ENCODE measurements at regions of chr4 and their contacts with region 1.

Region 1: DNA sequence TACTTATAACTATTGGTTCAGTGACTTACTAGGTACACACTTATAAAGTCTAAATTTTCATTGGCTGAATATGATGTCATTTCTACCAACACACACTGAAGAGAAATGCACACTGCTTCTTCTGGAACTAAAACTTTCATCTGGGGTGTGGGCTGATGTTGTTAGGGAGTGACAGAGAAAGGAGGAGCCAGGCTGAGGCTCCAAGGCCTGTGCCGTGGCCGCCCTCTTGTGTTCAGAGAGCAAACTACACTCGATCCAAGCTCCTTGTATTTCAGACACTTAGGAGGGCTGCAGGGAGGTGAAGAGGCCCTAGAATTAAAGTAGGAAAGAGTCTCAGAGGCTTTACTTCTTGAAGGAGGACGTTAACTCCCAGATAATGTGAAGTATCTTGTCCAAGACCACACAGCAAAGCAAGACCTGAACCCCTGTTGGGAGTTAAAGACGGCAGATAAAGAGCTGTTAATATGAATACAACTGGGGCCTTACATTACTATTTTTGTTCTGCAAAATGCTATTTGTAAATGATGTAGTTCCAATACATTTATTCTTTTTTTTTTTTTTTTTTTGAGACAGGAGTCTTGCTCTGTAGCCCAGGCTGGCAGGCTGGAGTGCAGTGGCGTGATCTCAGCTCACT is 137.5 kb downstream of the AFAP1 start:
- DNase-seq: peak; percentile 87
- ATAC-seq: peak; percentile 88
- H3K4me3 Mint-ChIP-seq: no peak overlapping the region
- H3K27ac Mint-ChIP-seq: no peak overlapping the region
- H3K4me1 Mint-ChIP-seq: peaks cover 8% of the 10 kb centered on the region
- H3K27me3 Mint-ChIP-seq: no peaks in the 10 kb centered on the region

Region 2: DNA sequence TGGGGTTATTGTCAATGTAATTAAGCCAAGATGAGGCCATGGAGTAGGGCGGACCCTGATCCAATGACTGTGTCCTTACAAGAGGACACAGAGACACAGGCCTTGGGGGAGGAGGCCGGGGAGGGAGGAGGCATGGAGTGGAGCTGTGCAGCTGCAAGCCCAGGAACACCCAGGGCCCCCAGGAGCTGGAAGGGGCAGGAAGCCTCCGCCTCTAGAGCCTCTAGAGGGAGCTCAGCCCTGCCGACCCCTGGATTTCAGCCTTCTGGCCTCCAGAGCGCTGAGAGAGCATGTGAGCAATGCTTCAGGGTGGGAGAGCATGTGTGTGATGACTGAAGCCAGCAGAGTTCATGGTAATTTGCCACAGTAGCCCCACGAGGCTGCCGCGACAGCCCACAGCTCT is 97.1 kb before region 1 on chr4:
- CTCF ChIA-PET with region 1: no interaction called
- POLR2A ChIA-PET with region 1: no interaction called
- DNase-seq: no peak
- ATAC-seq: no peak
- H3K4me3 Mint-ChIP-seq: no peak overlapping the region
- H3K27ac Mint-ChIP-seq: no peak overlapping the region
- H3K4me1 Mint-ChIP-seq: peaks cover 9% of the 10 kb centered on the region
- H3K27me3 Mint-ChIP-seq: no peaks in the 10 kb centered on the region

Region 3: DNA sequence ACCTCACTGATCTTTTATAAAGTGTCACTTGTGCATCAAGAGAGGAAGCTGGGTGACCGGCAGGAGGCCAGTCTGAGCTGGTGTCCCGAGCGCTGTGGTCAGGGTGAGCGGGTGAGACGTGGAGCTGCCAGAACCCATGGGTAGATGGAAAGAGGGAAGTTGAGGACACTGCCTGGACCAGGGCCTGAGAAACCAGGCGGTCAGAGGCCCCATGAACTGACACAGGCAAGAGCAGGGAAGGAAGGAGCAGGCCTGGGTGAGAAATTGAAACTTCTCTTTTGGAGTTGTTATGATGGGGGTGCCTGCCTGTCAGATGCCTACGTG is 55.2 kb before region 1 on chr4:
- CTCF ChIA-PET with region 1: no interaction called
- POLR2A ChIA-PET with region 1: no interaction called
- DNase-seq: no peak
- ATAC-seq: no peak
- H3K4me3 Mint-ChIP-seq: no peak overlapping the region
- H3K27ac Mint-ChIP-seq: no peak overlapping the region
- H3K4me1 Mint-ChIP-seq: peaks cover 17% of the 10 kb centered on the region
- H3K27me3 Mint-ChIP-seq: no peaks in the 10 kb centered on the region

Region 4: GRCh38 chr4:7770224-7771050 is 31.8 kb before region 1 on chr4:
- CTCF ChIA-PET with region 1: interaction called, 70 read pairs
- POLR2A ChIA-PET with region 1: no interaction called
- DNase-seq: peak; percentile 51
- ATAC-seq: peak; percentile 21
- H3K4me3 Mint-ChIP-seq: no peak overlapping the region
- H3K27ac Mint-ChIP-seq: peak overlapping the region; percentile 76
- H3K4me1 Mint-ChIP-seq: peaks cover 24% of the 10 kb centered on the region
- H3K27me3 Mint-ChIP-seq: no peaks in the 10 kb centered on the region

Region 5: DNA sequence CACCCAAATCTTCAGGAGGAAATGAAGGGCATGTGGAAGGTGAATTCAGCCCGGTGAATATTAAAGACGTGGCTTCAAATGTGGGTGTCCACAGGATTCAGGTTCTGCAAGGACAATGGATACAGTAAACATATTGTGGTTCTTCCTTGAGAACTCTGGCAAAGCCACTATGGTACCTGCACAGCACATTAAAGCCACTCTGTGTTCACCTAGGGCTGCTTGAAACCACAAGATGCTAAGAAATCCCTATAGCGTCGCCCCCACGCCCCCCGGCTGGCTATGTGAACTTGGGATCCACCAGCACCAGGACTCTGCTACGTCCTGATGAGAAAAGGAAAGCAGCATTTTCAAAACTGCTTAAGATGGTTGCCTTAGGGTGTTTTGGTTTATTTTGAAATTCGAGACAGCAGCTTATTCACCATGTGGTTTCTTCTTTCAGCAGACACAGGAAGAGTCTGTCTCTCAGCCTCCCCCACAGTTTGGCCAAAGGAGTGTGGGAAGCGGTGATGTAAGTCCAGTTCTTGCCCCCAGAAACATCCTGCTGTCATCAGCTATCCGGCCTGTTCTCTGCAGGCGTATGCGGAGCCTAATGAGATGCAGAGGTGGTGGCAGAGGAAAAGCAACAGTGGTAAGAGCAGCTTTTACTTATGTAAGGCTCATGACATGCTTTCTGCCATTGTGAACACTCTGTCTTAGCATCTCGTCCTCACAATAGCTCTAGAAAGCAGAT is 25.9 kb after region 1 on chr4:
- CTCF ChIA-PET with region 1: interaction called, 20 read pairs
- POLR2A ChIA-PET with region 1: no interaction called
- DNase-seq: peak; percentile 72
- ATAC-seq: peak; percentile 76
- H3K4me3 Mint-ChIP-seq: peak overlapping the region; percentile 49
- H3K27ac Mint-ChIP-seq: peak overlapping the region; percentile 89
- H3K4me1 Mint-ChIP-seq: peaks cover 37% of the 10 kb centered on the region
- H3K27me3 Mint-ChIP-seq: no peaks in the 10 kb centered on the region

Region 6: GRCh38 chr4:7854697-7855370 is 52.6 kb after region 1 on chr4:
- CTCF ChIA-PET with region 1: interaction called, 11 read pairs
- POLR2A ChIA-PET with region 1: interaction called, 3 read pairs
- DNase-seq: peak; percentile 84
- ATAC-seq: peak; percentile 97
- H3K4me3 Mint-ChIP-seq: peak overlapping the region; percentile 55
- H3K27ac Mint-ChIP-seq: peak overlapping the region; percentile 92
- H3K4me1 Mint-ChIP-seq: peaks cover 64% of the 10 kb centered on the region
- H3K27me3 Mint-ChIP-seq: peaks cover 2% of the 10 kb centered on the region

Region 7: GRCh38 chr4:7939377-7940108 is 137.3 kb after region 1 on chr4 and contains the start of gene AFAP1:
- CTCF ChIA-PET with region 1: interaction called, 11 read pairs
- POLR2A ChIA-PET with region 1: no interaction called
- DNase-seq: peak; percentile 86
- ATAC-seq: peak; percentile 97
- H3K4me3 Mint-ChIP-seq: peak within 1 kb of the TSS; percentile 63
- H3K27ac Mint-ChIP-seq: no peak within 1 kb of the TSS
- H3K4me1 Mint-ChIP-seq: peaks cover 20% of the 10 kb centered on the region
- H3K27me3 Mint-ChIP-seq: peaks cover 27% of the 10 kb centered on the region
- total RNA-seq, gene AFAP1: 5.3 to 6.2 TPM